PC-9 (cell line): ENCODE measurements at regions of chr17 and their contacts with region 1.

Region 1: DNA sequence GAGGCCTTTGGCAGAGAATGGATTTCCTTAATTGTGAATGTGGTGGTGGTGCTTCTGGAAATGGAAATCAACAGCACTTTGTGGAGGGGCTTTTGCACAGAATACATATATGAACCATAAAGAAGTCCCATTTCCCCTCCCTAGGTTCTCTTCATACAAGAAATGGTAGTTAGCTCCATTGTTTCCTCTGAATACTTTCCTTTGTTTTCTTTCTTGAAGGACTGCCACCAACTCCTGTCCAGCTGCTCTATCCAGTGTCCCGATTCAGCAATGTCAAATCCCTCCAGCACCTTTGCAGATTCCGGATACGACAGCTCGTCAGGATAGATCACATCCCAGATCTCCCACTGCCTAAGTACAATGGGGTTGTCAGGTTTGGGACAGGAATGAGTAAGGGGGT is 33.2 kb upstream of the ARHGAP23 start:
- DNase-seq: no peak
- H3K4me3 ChIP-seq: no peak overlapping the region
- H3K27ac ChIP-seq: no peak overlapping the region
- H3K4me1 ChIP-seq: no peaks in the 10 kb centered on the region
- H3K27me3 ChIP-seq: no peaks in the 10 kb centered on the region
- CTCF ChIP-seq: no peak

Region 2: GRCh38 chr17:38379438-38379837 is 15.7 kb before region 1 on chr17:
- CTCF ChIA-PET with region 1: no interaction called
- POLR2A ChIA-PET with region 1: interaction called, 19 read pairs
- intact Hi-C with region 1: no loop called
- DNase-seq: peak in 1 of 2 experiments; percentile 62
- H3K4me3 ChIP-seq: no peak overlapping the region
- H3K27ac ChIP-seq: 0 out of 2 replicates have a peak overlapping the region, but pooled peaks have one; percentile 7
- H3K4me1 ChIP-seq: no peaks in the 10 kb centered on the region
- H3K27me3 ChIP-seq: no peaks in the 10 kb centered on the region
- CTCF ChIP-seq: no peak